CD4-positive, alpha-beta memory T cell (primary cell): ENCODE measurements at regions of chr10 and their contacts with region 1.

Region 1: DNA sequence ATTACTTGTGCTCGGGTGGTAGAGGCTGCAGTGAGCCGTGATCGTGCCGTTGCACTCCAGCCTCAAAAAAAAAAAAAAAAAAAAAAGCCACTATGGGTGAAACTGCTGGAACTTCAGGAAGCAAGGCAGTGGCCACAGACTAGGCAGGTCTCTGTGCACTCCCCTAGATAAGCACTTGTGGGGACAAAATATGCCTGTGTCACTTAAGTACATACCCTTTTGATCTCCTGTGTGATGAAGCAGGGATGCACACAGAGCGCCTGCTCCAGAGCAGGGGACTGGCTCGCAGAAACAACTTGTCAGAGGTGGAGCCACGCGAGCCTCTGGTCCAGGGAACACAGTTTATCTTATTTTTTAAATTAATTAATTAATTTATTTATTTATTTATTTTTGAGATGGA is 42.9 kb upstream of the PSAP start:
- DNase-seq: no peak
- H3K4me3 ChIP-seq: no peak overlapping the region
- H3K4me3 Mint-ChIP-seq: no peak overlapping the region
- H3K27ac ChIP-seq: no peak overlapping the region
- H3K27ac Mint-ChIP-seq: no peak overlapping the region
- H3K4me1 ChIP-seq: peaks cover 9% of the 10 kb centered on the region
- H3K4me1 Mint-ChIP-seq: peaks cover 2 to 12% (median 6%) of the 10 kb centered on the region in 4 donors
- H3K27me3 ChIP-seq: no peaks in the 10 kb centered on the region
- H3K27me3 Mint-ChIP-seq: peaks cover 1 to 7% of the 10 kb centered on the region in 2 donors

Region 2: GRCh38 chr10:71383972-71384687 is 509.8 kb before region 1 on chr10:
- CTCF ChIA-PET with region 1: interaction called, 6 read pairs
- POLR2A ChIA-PET with region 1: no interaction called
- intact Hi-C with region 1: loop called (anchors 1 kb)
- DNase-seq: peak; percentile 56 to 67 (median 60)
- H3K4me3 ChIP-seq: no peak overlapping the region
- H3K4me3 Mint-ChIP-seq: no peak overlapping the region
- H3K27ac ChIP-seq: no peak overlapping the region
- H3K27ac Mint-ChIP-seq: no peak overlapping the region
- H3K4me1 ChIP-seq: no peaks in the 10 kb centered on the region
- H3K4me1 Mint-ChIP-seq: peaks cover 0 to 3% (median 0%) of the 10 kb centered on the region in 4 donors
- H3K27me3 ChIP-seq: no peaks in the 10 kb centered on the region
- H3K27me3 Mint-ChIP-seq: peaks cover 2 to 3% of the 10 kb centered on the region in 2 donors

Region 3: GRCh38 chr10:71748671-71749191 is 145.2 kb before region 1 on chr10:
- CTCF ChIA-PET with region 1: no interaction called
- POLR2A ChIA-PET with region 1: no interaction called
- intact Hi-C with region 1: no loop called
- DNase-seq: peak; percentile 86 to 90 (median 87)
- H3K4me3 ChIP-seq: peak overlapping the region in 1 of 2 donors; percentile 39
- H3K4me3 Mint-ChIP-seq: peak overlapping the region; percentile 76 to 89 (median 84)
- H3K27ac ChIP-seq: peak overlapping the region; percentile 58
- H3K27ac Mint-ChIP-seq: peak overlapping the region; percentile 92 to 99 (median 98)
- H3K4me1 ChIP-seq: peaks cover 100% of the 10 kb centered on the region
- H3K4me1 Mint-ChIP-seq: peaks cover 74 to 98% (median 92%) of the 10 kb centered on the region in 4 donors
- H3K27me3 ChIP-seq: no peaks in the 10 kb centered on the region
- H3K27me3 Mint-ChIP-seq: no peaks in the 10 kb centered on the region

Region 4: DNA sequence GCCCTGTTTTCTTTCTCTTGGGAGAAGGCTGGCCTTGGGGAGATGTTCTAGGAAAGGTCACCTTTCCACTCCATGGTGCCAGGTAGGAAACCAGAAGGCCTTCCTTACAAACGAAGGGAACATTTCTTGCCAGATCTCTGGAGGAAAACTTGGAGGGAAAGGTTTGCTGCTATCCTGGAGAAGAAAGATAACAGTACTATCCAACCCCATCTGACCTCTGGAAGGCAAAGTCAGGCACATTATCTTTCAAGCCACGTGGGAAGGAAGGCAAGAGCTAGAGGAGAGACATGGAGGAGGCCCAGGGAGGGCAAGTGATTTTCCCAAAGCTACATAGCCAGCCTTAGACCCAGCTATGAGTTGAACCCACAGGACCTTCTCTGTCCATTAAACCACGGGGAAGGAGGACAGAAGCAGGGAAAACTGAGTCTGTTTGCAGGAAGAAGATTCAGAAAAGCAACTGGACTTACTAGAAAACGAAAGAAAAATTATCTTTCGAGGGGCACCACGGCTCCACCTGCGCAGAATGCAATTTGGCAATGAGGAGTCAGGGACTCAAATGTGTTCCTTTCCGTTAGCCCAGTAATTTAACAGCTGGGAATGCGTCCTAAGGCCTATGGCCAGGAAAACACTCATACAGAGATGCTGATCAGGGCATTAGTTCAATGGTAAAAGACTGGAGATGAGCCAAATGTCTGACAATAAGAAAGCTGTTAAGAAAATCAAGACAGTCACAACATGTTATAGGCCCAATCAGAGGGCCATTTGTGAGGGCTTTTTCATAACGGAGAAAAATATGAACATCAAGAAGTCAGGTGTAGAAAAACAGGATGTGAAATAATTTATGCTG is 10.9 kb before region 1 on chr10:
- CTCF ChIA-PET with region 1: interaction called, 11 read pairs
- POLR2A ChIA-PET with region 1: no interaction called
- intact Hi-C with region 1: no loop called
- DNase-seq: no peak
- H3K4me3 ChIP-seq: no peak overlapping the region
- H3K4me3 Mint-ChIP-seq: no peak overlapping the region
- H3K27ac ChIP-seq: no peak overlapping the region
- H3K27ac Mint-ChIP-seq: peak overlapping the region in 1 of 7 donors; percentile 17
- H3K4me1 ChIP-seq: peaks cover 8% of the 10 kb centered on the region
- H3K4me1 Mint-ChIP-seq: peaks cover 0 to 9% (median 3%) of the 10 kb centered on the region in 4 donors
- H3K27me3 ChIP-seq: no peaks in the 10 kb centered on the region
- H3K27me3 Mint-ChIP-seq: peaks cover 0 to 1% of the 10 kb centered on the region in 2 donors

Region 5: GRCh38 chr10:71905164-71905563 is 11.2 kb after region 1 on chr10:
- CTCF ChIA-PET with region 1: interaction called, 24 read pairs
- POLR2A ChIA-PET with region 1: no interaction called
- intact Hi-C with region 1: no loop called
- DNase-seq: no peak
- H3K4me3 ChIP-seq: no peak overlapping the region
- H3K4me3 Mint-ChIP-seq: no peak overlapping the region
- H3K27ac ChIP-seq: no peak overlapping the region
- H3K27ac Mint-ChIP-seq: peak overlapping the region in 1 of 7 donors; percentile 48
- H3K4me1 ChIP-seq: no peaks in the 10 kb centered on the region
- H3K4me1 Mint-ChIP-seq: peaks cover 5 to 10% (median 7%) of the 10 kb centered on the region in 4 donors
- H3K27me3 ChIP-seq: no peaks in the 10 kb centered on the region
- H3K27me3 Mint-ChIP-seq: no peaks in the 10 kb centered on the region

Region 6: GRCh38 chr10:72223743-72224101 is 329.8 kb after region 1 on chr10:
- CTCF ChIA-PET with region 1: interaction called, 8 read pairs
- POLR2A ChIA-PET with region 1: interaction called, 3 read pairs
- intact Hi-C with region 1: loop called (anchors 2 kb)
- DNase-seq: no peak
- H3K4me3 ChIP-seq: no peak overlapping the region
- H3K4me3 Mint-ChIP-seq: peak overlapping the region in 3 of 8 donors; percentile 22 to 69 (median 44)
- H3K27ac ChIP-seq: no peak overlapping the region
- H3K27ac Mint-ChIP-seq: peak overlapping the region; percentile 17 to 91 (median 78)
- H3K4me1 ChIP-seq: peaks cover 54% of the 10 kb centered on the region
- H3K4me1 Mint-ChIP-seq: peaks cover 36 to 57% (median 45%) of the 10 kb centered on the region in 4 donors
- H3K27me3 ChIP-seq: no peaks in the 10 kb centered on the region
- H3K27me3 Mint-ChIP-seq: no peaks in the 10 kb centered on the region